ENCODE measurements at regions of chr6 and their contacts with region 1.

Region 1: DNA sequence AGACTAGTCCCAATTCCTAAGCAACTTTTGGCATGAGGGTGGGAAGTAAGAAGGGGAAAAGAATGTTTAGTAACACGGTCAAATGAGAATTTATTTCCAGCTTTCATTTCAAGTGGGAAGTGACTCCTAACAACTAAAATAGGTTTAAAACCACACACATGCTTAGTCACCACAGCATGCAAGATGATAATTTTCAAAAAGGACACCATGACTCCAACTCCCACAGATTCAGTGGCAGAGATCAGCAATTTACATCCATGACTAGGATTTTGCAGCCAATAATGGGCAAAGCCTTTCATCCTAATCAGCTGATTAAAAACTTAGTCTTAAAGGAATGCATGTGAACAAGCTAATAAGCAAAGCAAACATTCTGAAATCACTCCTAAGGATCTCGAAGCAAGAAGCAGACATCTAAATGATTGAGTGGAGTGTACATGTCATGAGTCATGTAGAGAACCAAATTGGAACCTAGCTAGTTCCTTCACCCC is 48.1 kb upstream of the GCLC start:
- DNase-seq: peak; percentile 42 to 60 (median 48)
- H3K4me3 ChIP-seq: peak overlapping the region in 2 of 3 experiments; percentile 16 to 33
- H3K4me3 Mint-ChIP-seq: peak overlapping the region in 1 of 2 donors; percentile 79
- H3K27ac ChIP-seq: peak overlapping the region in 1 of 2 donors; percentile 73
- H3K27ac Mint-ChIP-seq: peak overlapping the region; percentile 9 to 89 (median 79)
- H3K4me1 ChIP-seq: peaks cover 21 to 24% of the 10 kb centered on the region in 2 donors
- H3K4me1 Mint-ChIP-seq: peaks cover 17% of the 10 kb centered on the region
- H3K27me3 ChIP-seq: no peaks in the 10 kb centered on the region
- H3K27me3 Mint-ChIP-seq: no peaks in the 10 kb centered on the region
- CTCF ChIP-seq: no peak

Region 2: DNA sequence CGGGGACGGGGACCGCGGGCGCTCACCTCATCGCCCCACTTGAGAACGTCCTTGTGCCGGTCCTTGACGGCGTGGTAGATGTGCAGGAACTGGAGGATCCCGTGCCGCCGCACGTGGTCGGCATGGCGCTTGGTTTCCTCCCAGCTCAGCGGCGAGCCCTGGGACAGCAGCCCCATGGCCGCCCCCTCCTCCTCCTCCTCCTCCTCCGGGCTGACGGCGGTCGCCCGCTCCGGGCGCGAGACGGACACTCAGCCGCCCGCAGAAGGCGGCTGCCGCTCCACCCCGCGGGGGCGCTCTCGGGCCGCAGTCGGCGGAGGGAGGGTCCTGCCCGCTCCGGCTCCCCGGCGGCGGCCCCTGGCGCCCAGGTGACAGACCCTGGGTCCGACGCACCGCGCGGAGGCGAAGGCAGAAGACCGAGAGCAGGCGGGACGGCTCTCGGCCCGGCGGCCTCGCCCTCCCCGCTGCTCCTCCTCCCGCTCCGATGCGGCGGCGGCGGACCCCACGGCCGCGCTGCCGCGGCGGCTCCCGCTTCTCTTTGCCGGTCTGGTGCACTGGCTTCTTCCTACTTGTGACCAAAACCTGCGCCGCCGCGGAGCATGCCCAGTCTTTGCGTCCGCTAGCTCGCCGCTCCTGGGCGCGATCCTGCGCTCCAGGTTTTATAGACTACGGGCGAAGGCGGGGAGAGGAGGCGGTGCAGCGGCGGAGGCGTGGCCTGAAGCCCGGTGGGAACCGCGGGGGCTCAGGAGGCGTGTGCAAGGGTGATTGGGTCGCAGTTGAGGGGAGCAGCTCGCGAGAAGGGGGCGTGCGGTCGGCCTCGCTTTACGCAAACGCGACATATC is 48.4 kb before region 1 on chr6 and contains the start of gene GCLC:
- intact Hi-C with region 1: loop called in 1 of 2 experiments (anchors 5 kb)
- DNase-seq: peak; percentile 90 to 91 (median 90)
- H3K4me3 ChIP-seq: peak within 1 kb of the TSS; percentile 52 to 89 (median 84)
- H3K4me3 Mint-ChIP-seq: peak within 1 kb of the TSS; percentile 97
- H3K27ac ChIP-seq: peak within 1 kb of the TSS; percentile 48 to 83
- H3K27ac Mint-ChIP-seq: peak within 1 kb of the TSS; percentile 79 to 92 (median 91)
- H3K4me1 ChIP-seq: peaks cover 40 to 50% of the 10 kb centered on the region in 2 donors
- H3K4me1 Mint-ChIP-seq: peaks cover 56% of the 10 kb centered on the region
- H3K27me3 ChIP-seq: no peaks in the 10 kb centered on the region
- H3K27me3 Mint-ChIP-seq: peaks cover 2 to 9% (median 5%) of the 10 kb centered on the region in 3 donors
- CTCF ChIP-seq: peak; percentile 89
- polyA plus RNA-seq, gene GCLC: 6.4 to 15.7 (median 10.1) TPM

Measured in CD14-positive monocyte (primary cell).